SK-N-SH (cell line): ENCODE measurements at regions of chr12 and their contacts with region 1.

Region 1: GRCh38 chr12:108381787-108382436 is 42.8 kb upstream of the CMKLR1 start:
- DNase-seq: no peak
- H3K4me3 ChIP-seq: no peak overlapping the region
- H3K27ac ChIP-seq: peak overlapping the region in 1 of 2 experiments; percentile 92; a peak in 2 of 4 replicates
- H3K4me1 ChIP-seq: peaks cover 0 to 30% of the 10 kb centered on the region in 2 experiments; a peak in 2 of 4 replicates
- H3K27me3 ChIP-seq: no peaks in the 10 kb centered on the region
- CTCF ChIP-seq: no peak
- EP300 ChIP-seq: peak in 1 of 2 experiments; percentile 59; a peak in 1 of 4 replicates
- RAD21 ChIP-seq: no peak

Region 2: DNA sequence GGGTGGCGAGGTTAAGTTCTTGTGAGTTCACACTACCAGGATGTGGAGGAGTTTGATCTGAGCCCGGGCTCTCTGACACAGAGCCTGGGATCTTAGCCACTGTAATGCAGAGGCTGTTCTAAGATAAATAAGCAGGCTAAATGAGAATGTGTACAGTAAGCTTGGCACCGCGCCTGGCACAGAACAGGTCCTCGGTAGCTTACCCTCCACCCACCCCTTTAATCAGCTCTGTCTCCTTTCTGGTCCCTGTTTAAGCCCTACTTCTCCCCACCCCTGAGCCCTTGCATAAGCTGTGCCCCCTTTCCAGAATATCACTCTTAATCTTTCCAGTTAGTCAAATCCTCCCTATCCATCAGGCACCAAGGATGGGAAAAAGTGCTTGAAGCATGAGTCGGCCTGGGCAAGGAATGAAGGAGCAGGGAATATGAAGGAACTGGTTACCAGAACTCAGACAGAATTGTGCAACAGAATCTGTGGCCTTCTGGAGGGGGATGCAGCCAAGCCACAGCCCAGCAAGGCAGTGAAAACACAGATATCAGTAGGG is 10.0 kb before region 1 on chr12:
- CTCF ChIA-PET with region 1: interaction called, 21 read pairs
- POLR2A ChIA-PET with region 1: interaction called, 4 read pairs
- DNase-seq: no peak
- H3K4me3 ChIP-seq: no peak overlapping the region
- H3K27ac ChIP-seq: peak overlapping the region in 1 of 2 experiments; percentile 98; a peak in 2 of 4 replicates
- H3K4me1 ChIP-seq: peaks cover 0 to 32% of the 10 kb centered on the region in 2 experiments; a peak in 2 of 4 replicates
- H3K27me3 ChIP-seq: no peaks in the 10 kb centered on the region
- CTCF ChIP-seq: no peak
- EP300 ChIP-seq: peak in 1 of 2 experiments; percentile 33; a peak in 2 of 4 replicates
- RAD21 ChIP-seq: no peak

Region 3: DNA sequence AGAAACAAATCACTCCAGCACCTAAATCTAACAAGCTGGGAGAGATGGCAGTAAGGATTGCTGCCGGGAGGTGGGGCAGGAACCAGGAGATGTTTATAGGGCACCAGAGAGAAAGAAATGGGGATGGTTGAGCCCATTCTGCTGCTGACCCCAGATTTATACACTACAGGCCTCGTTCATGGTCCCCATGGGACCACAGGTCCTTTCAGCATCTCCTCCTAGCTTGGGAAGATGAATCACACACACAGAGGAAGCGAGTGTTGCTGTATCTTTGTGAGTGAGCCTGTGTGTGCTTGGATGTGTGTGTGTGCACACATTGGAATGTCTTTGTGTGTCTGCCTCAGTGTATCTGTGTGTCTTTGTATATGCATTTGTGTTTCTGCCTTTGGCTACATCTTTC is 83.5 kb after region 1 on chr12:
- CTCF ChIA-PET with region 1: no interaction called
- POLR2A ChIA-PET with region 1: no interaction called
- DNase-seq: no peak
- H3K4me3 ChIP-seq: no peak overlapping the region
- H3K27ac ChIP-seq: no peak overlapping the region
- H3K4me1 ChIP-seq: peaks cover 0 to 8% of the 10 kb centered on the region in 2 experiments; a peak in 1 of 4 replicates
- H3K27me3 ChIP-seq: no peaks in the 10 kb centered on the region
- CTCF ChIP-seq: no peak
- EP300 ChIP-seq: no peak
- RAD21 ChIP-seq: no peak